ENCODE measurements at regions of chr3 and their contacts with region 1.

Region 1: GRCh38 chr3:177197041-177197727 is at the start of gene TBL1XR1:
- DNase-seq: peak; percentile 91 to 92 (median 92)
- H3K4me3 ChIP-seq: peak within 1 kb of the TSS; percentile 92 to 97
- H3K4me3 Mint-ChIP-seq: peak within 1 kb of the TSS; percentile 91 to 99 (median 98)
- H3K27ac ChIP-seq: peak within 1 kb of the TSS; percentile 89
- H3K27ac Mint-ChIP-seq: peak within 1 kb of the TSS; percentile 75 to 99 (median 98)
- H3K4me1 ChIP-seq: peaks cover 64% of the 10 kb centered on the region
- H3K4me1 Mint-ChIP-seq: peaks cover 44 to 78% (median 59%) of the 10 kb centered on the region in 4 donors
- H3K27me3 ChIP-seq: no peaks in the 10 kb centered on the region
- H3K27me3 Mint-ChIP-seq: no peaks in the 10 kb centered on the region
- total RNA-seq, gene TBL1XR1: 159 to 172 TPM

Region 2: GRCh38 chr3:176995946-176996345 is 201.2 kb before region 1 on chr3:
- CTCF ChIA-PET with region 1: no interaction called
- POLR2A ChIA-PET with region 1: no interaction called
- intact Hi-C with region 1: no loop called
- DNase-seq: no peak
- H3K4me3 ChIP-seq: no peak overlapping the region
- H3K4me3 Mint-ChIP-seq: no peak overlapping the region
- H3K27ac ChIP-seq: no peak overlapping the region
- H3K27ac Mint-ChIP-seq: no peak overlapping the region
- H3K4me1 ChIP-seq: no peaks in the 10 kb centered on the region
- H3K4me1 Mint-ChIP-seq: no peaks in the 10 kb centered on the region
- H3K27me3 ChIP-seq: no peaks in the 10 kb centered on the region
- H3K27me3 Mint-ChIP-seq: peaks cover 0 to 7% of the 10 kb centered on the region in 2 donors

Region 3: GRCh38 chr3:177119829-177120228 is 77.4 kb before region 1 on chr3:
- CTCF ChIA-PET with region 1: no interaction called
- POLR2A ChIA-PET with region 1: interaction called, 4 read pairs
- intact Hi-C with region 1: loop called (anchors 2 kb)
- DNase-seq: no peak
- H3K4me3 ChIP-seq: no peak overlapping the region
- H3K4me3 Mint-ChIP-seq: peak overlapping the region in 1 of 8 donors; percentile 22
- H3K27ac ChIP-seq: no peak overlapping the region
- H3K27ac Mint-ChIP-seq: peak overlapping the region in 4 of 7 donors; percentile 7 to 49 (median 23)
- H3K4me1 ChIP-seq: peaks cover 44% of the 10 kb centered on the region
- H3K4me1 Mint-ChIP-seq: peaks cover 61 to 92% (median 79%) of the 10 kb centered on the region in 4 donors
- H3K27me3 ChIP-seq: no peaks in the 10 kb centered on the region
- H3K27me3 Mint-ChIP-seq: no peaks in the 10 kb centered on the region

Region 4: GRCh38 chr3:177169936-177170722 is 27.1 kb before region 1 on chr3:
- CTCF ChIA-PET with region 1: no interaction called
- POLR2A ChIA-PET with region 1: interaction called, 4 read pairs
- intact Hi-C with region 1: loop called (anchors 2 kb)
- DNase-seq: no peak
- H3K4me3 ChIP-seq: no peak overlapping the region
- H3K4me3 Mint-ChIP-seq: peak overlapping the region in 7 of 8 donors; percentile 6 to 70 (median 46)
- H3K27ac ChIP-seq: no peak overlapping the region
- H3K27ac Mint-ChIP-seq: peak overlapping the region in 5 of 7 donors; percentile 49 to 89 (median 51)
- H3K4me1 ChIP-seq: peaks cover 60% of the 10 kb centered on the region
- H3K4me1 Mint-ChIP-seq: peaks cover 54 to 80% (median 65%) of the 10 kb centered on the region in 4 donors
- H3K27me3 ChIP-seq: no peaks in the 10 kb centered on the region
- H3K27me3 Mint-ChIP-seq: no peaks in the 10 kb centered on the region

Region 5: GRCh38 chr3:177236704-177237103 is 39.5 kb after region 1 on chr3:
- CTCF ChIA-PET with region 1: no interaction called
- POLR2A ChIA-PET with region 1: no interaction called
- intact Hi-C with region 1: no loop called
- DNase-seq: no peak
- H3K4me3 ChIP-seq: no peak overlapping the region
- H3K4me3 Mint-ChIP-seq: no peak overlapping the region
- H3K27ac ChIP-seq: no peak overlapping the region
- H3K27ac Mint-ChIP-seq: no peak overlapping the region
- H3K4me1 ChIP-seq: no peaks in the 10 kb centered on the region
- H3K4me1 Mint-ChIP-seq: peaks cover 5 to 8% (median 6%) of the 10 kb centered on the region in 4 donors
- H3K27me3 ChIP-seq: no peaks in the 10 kb centered on the region
- H3K27me3 Mint-ChIP-seq: no peaks in the 10 kb centered on the region

Region 6: DNA sequence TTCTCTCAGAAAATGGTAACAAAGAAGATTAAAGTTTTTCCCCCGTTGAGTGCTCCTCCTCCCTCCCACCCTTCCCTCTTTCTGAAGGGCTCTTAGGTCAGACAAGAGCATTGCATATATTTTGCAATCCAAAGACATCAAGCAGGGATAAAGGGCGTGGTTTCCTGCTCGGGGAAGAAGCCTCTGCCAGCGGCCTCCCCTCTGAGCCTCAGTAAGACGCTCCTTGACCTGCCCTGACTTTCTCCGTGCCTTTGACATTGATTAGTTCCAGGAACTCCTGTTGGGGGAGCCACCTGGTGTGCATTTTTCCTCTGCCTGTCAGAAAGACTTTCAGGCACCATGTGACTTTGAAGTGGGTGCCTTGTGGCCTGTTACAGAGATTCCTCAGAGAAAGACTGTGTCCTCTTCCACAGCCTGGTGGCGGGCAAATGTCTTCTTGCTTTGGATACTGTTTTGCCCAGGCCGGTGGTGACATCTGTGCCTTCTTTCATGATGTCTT is 87.2 kb after region 1 on chr3:
- CTCF ChIA-PET with region 1: no interaction called
- POLR2A ChIA-PET with region 1: interaction called, 3 read pairs
- intact Hi-C with region 1: loop called (anchors 2 kb)
- DNase-seq: peak in 4 of 5 donors; percentile 5 to 13 (median 7)
- H3K4me3 ChIP-seq: no peak overlapping the region
- H3K4me3 Mint-ChIP-seq: peak overlapping the region in 6 of 8 donors; percentile 22 to 65 (median 60)
- H3K27ac ChIP-seq: no peak overlapping the region
- H3K27ac Mint-ChIP-seq: peak overlapping the region in 3 of 7 donors; percentile 39 to 82 (median 77)
- H3K4me1 ChIP-seq: peaks cover 24% of the 10 kb centered on the region
- H3K4me1 Mint-ChIP-seq: peaks cover 16 to 34% (median 22%) of the 10 kb centered on the region in 4 donors
- H3K27me3 ChIP-seq: no peaks in the 10 kb centered on the region
- H3K27me3 Mint-ChIP-seq: no peaks in the 10 kb centered on the region

Region 7: GRCh38 chr3:177426878-177427495 is 229.8 kb after region 1 on chr3:
- CTCF ChIA-PET with region 1: no interaction called
- POLR2A ChIA-PET with region 1: interaction called, 19 read pairs
- intact Hi-C with region 1: no loop called
- DNase-seq: peak; percentile 46 to 61 (median 57)
- H3K4me3 ChIP-seq: peak overlapping the region; percentile 8 to 10
- H3K4me3 Mint-ChIP-seq: peak overlapping the region; percentile 38 to 90 (median 75)
- H3K27ac ChIP-seq: peak overlapping the region; percentile 46
- H3K27ac Mint-ChIP-seq: peak overlapping the region; percentile 56 to 96 (median 92)
- H3K4me1 ChIP-seq: peaks cover 39% of the 10 kb centered on the region
- H3K4me1 Mint-ChIP-seq: peaks cover 22 to 37% (median 32%) of the 10 kb centered on the region in 4 donors
- H3K27me3 ChIP-seq: no peaks in the 10 kb centered on the region
- H3K27me3 Mint-ChIP-seq: no peaks in the 10 kb centered on the region

Region 8: DNA sequence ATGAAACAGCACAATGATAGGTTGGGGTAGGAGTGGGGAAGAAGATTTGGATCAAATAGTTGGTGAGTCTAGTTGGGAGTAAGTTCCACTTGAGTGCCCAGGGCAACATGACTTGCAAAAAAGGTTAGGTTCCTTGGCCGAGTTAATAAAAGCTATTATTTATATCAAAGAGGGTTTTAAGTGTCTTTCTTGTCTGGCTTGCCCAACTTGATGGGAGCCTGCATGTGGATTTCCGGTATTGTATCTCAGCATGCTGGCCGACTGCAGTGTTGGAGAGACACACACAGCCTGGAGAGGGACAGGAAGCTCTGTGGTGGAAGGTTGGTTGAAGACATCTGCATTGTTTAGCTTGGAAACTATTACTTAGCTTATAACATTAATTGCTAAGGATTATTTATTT is 449.6 kb after region 1 on chr3:
- CTCF ChIA-PET with region 1: no interaction called
- POLR2A ChIA-PET with region 1: interaction called, 4 read pairs
- intact Hi-C with region 1: loop called (anchors 5 kb)
- DNase-seq: peak; percentile 26 to 67 (median 38)
- H3K4me3 ChIP-seq: no peak overlapping the region
- H3K4me3 Mint-ChIP-seq: peak overlapping the region in 6 of 8 donors; percentile 37 to 82 (median 59)
- H3K27ac ChIP-seq: no peak overlapping the region
- H3K27ac Mint-ChIP-seq: peak overlapping the region; percentile 70 to 88 (median 80)
- H3K4me1 ChIP-seq: peaks cover 73% of the 10 kb centered on the region
- H3K4me1 Mint-ChIP-seq: peaks cover 55 to 70% (median 63%) of the 10 kb centered on the region in 4 donors
- H3K27me3 ChIP-seq: no peaks in the 10 kb centered on the region
- H3K27me3 Mint-ChIP-seq: no peaks in the 10 kb centered on the region

Region 9: GRCh38 chr3:178385280-178385952 is 1188.2 kb after region 1 on chr3:
- CTCF ChIA-PET with region 1: no interaction called
- POLR2A ChIA-PET with region 1: no interaction called
- intact Hi-C with region 1: loop called (anchors 10 kb)
- DNase-seq: peak in 4 of 5 donors; percentile 19 to 36 (median 20)
- H3K4me3 ChIP-seq: no peak overlapping the region
- H3K4me3 Mint-ChIP-seq: no peak overlapping the region
- H3K27ac ChIP-seq: no peak overlapping the region
- H3K27ac Mint-ChIP-seq: no peak overlapping the region
- H3K4me1 ChIP-seq: no peaks in the 10 kb centered on the region
- H3K4me1 Mint-ChIP-seq: no peaks in the 10 kb centered on the region
- H3K27me3 ChIP-seq: no peaks in the 10 kb centered on the region
- H3K27me3 Mint-ChIP-seq: peaks cover 8 to 9% of the 10 kb centered on the region in 2 donors